B cell (primary cell): ENCODE measurements at regions of chr19 and their contacts with region 1.

Region 1: GRCh38 chr19:33778089-33778791 is 18.4 kb upstream of the KCTD15 start:
- DNase-seq: peak; percentile 87
- ATAC-seq: peak; percentile 100
- H3K4me3 ChIP-seq: no peak overlapping the region
- H3K4me3 Mint-ChIP-seq: no peak overlapping the region
- H3K27ac ChIP-seq: no peak overlapping the region
- H3K27ac Mint-ChIP-seq: no peak overlapping the region
- H3K4me1 ChIP-seq: peaks cover 3 to 4% of the 10 kb centered on the region in 2 donors
- H3K4me1 Mint-ChIP-seq: peaks cover 7% of the 10 kb centered on the region
- H3K27me3 ChIP-seq: peaks cover 0 to 27% (median 2%) of the 10 kb centered on the region in 4 experiments
- H3K27me3 Mint-ChIP-seq: peaks cover 50% of the 10 kb centered on the region
- CTCF ChIP-seq: peak; percentile 100

Region 2: DNA sequence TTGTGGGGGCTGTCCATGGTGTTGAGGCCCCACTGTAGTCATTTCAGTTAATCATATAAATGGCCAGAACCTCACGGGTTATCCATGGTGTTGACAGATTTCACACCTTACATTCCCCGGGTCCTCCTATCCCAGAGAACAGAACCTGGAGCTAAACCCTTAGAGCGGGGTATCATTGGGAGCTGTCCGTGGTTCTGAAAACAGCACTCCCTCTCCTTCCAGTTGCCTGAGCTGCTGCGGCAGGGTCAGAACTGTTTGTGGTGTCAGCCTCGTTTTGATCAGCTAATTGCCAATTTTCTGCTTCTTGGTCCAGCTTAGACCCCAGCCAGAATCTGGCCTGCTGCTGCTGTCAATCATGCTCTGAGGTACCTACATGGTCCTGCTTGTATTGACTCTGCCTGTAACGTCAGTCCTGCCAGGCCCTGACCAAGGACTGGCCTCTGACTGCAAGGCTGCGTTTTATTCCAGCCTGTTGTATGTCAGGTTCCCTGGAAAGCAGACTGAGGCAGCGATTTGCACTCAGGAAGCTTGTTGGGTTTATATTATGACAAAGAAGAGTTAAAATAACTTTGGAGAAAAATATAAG is 37.3 kb before region 1 on chr19:
- CTCF ChIA-PET with region 1: no interaction called
- POLR2A ChIA-PET with region 1: no interaction called
- intact Hi-C with region 1: no loop called
- DNase-seq: no peak
- ATAC-seq: no peak
- H3K4me3 ChIP-seq: no peak overlapping the region
- H3K4me3 Mint-ChIP-seq: no peak overlapping the region
- H3K27ac ChIP-seq: no peak overlapping the region
- H3K27ac Mint-ChIP-seq: no peak overlapping the region
- H3K4me1 ChIP-seq: no peaks in the 10 kb centered on the region
- H3K4me1 Mint-ChIP-seq: no peaks in the 10 kb centered on the region
- H3K27me3 ChIP-seq: peaks cover 0 to 2% (median 0%) of the 10 kb centered on the region in 4 experiments
- H3K27me3 Mint-ChIP-seq: no peaks in the 10 kb centered on the region
- CTCF ChIP-seq: no peak

Region 3: GRCh38 chr19:33998739-33999345 is 220.6 kb after region 1 on chr19:
- CTCF ChIA-PET with region 1: interaction called, 15 read pairs
- POLR2A ChIA-PET with region 1: no interaction called
- intact Hi-C with region 1: loop called (anchors 1 kb)
- DNase-seq: peak; percentile 5
- ATAC-seq: no peak
- H3K4me3 ChIP-seq: no peak overlapping the region
- H3K4me3 Mint-ChIP-seq: no peak overlapping the region
- H3K27ac ChIP-seq: no peak overlapping the region
- H3K27ac Mint-ChIP-seq: no peak overlapping the region
- H3K4me1 ChIP-seq: no peaks in the 10 kb centered on the region
- H3K4me1 Mint-ChIP-seq: no peaks in the 10 kb centered on the region
- H3K27me3 ChIP-seq: no peaks in the 10 kb centered on the region
- H3K27me3 Mint-ChIP-seq: peaks cover 19% of the 10 kb centered on the region
- CTCF ChIP-seq: peak; percentile 61

Region 4: GRCh38 chr19:34096020-34096915 is 318.0 kb after region 1 on chr19:
- CTCF ChIA-PET with region 1: interaction called, 38 read pairs
- POLR2A ChIA-PET with region 1: no interaction called
- intact Hi-C with region 1: no loop called
- DNase-seq: peak; percentile 51
- ATAC-seq: no peak
- H3K4me3 ChIP-seq: no peak overlapping the region
- H3K4me3 Mint-ChIP-seq: no peak overlapping the region
- H3K27ac ChIP-seq: no peak overlapping the region
- H3K27ac Mint-ChIP-seq: no peak overlapping the region
- H3K4me1 ChIP-seq: no peaks in the 10 kb centered on the region
- H3K4me1 Mint-ChIP-seq: peaks cover 2% of the 10 kb centered on the region
- H3K27me3 ChIP-seq: peaks cover 0 to 11% (median 0%) of the 10 kb centered on the region in 4 experiments
- H3K27me3 Mint-ChIP-seq: peaks cover 28% of the 10 kb centered on the region
- CTCF ChIP-seq: peak; percentile 69